Upper lobe of right lung (tissue), 1 donor: ENCODE measurements at regions of chr5 and their contacts with region 1.

Region 1: GRCh38 chr5:154202379-154203260 is 12.1 kb downstream of the GALNT10 start:
- DNase-seq: no peak
- ATAC-seq: no peak
- H3K4me3 ChIP-seq: no peak overlapping the region
- H3K27ac ChIP-seq: no peak overlapping the region
- H3K4me1 ChIP-seq: peaks cover 12% of the 10 kb centered on the region
- H3K27me3 ChIP-seq: no peaks in the 10 kb centered on the region
- CTCF ChIP-seq: no peak

Region 2: GRCh38 chr5:153601377-153601776 is 601.2 kb before region 1 on chr5:
- intact Hi-C with region 1: no loop called
- DNase-seq: no peak
- ATAC-seq: peak; percentile 58
- H3K4me3 ChIP-seq: no peak overlapping the region
- H3K27ac ChIP-seq: no peak overlapping the region
- H3K4me1 ChIP-seq: no peaks in the 10 kb centered on the region
- H3K27me3 ChIP-seq: no peaks in the 10 kb centered on the region
- CTCF ChIP-seq: no peak

Region 3: DNA sequence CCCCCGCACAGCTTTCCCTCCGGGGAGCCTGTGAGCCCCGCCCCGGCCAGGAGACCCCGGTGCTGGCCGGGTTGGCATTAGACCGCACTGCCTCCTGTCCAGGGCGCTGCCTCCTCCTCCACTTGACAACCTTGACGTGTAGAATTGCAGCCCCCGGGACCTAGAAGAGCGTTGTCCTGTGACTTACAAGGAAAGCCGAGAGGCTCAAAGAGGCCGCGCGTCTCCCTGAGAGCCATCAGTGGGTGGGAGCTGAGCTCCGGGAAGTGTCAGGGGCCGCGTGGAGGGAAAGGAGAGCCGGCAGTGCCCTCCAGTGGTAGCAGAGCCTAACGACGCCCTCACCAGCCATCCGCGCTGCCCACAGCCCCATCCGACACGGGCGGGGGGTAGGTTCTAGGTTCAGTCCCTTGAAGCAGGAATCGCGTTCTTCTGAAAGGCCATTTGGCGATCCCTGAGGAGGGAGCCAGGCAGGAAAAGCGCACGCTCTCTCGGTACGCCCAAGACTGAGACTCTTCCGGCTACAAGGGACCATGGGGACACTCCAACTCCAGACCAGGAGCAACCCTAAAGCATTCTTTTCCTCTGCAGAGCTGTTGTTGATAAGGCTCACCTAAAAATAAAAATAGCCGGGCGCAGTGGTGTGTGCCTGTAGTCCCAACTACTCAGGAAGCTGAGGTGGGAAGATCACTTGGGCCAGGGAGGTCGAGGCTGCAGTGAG is 202.6 kb after region 1 on chr5:
- intact Hi-C with region 1: loop called (anchors 10 kb)
- DNase-seq: peak; percentile 88
- ATAC-seq: peak; percentile 97
- H3K4me3 ChIP-seq: peak overlapping the region; percentile 32
- H3K27ac ChIP-seq: no peak overlapping the region
- H3K4me1 ChIP-seq: peaks cover 4% of the 10 kb centered on the region
- H3K27me3 ChIP-seq: no peaks in the 10 kb centered on the region
- CTCF ChIP-seq: peak; percentile 90